Psoas muscle (tissue), 8 donors: ENCODE measurements at regions of chr12 and their contacts with region 1.

Region 1: DNA sequence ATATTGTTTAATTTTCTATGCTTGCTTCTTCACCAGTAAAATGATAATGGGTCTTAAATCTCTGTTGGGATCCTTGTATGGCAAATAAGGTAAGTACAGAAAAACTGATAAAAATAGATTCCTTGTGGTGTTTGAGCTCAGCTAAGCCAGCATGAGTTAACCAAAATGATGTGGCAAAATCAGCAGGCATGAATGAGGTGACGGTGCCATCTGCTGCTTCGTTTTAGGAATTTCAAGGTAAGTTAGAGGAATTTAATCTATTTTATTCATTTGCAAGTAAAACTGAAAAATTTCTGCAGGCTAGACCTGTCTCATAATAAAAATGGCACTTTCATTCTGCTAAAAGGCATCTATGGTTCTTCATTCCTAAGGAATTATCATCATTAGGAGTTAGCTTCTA is 10.0 kb upstream of the CLEC7A start:
- DNase-seq: no peak
- ATAC-seq: no peak
- H3K4me3 ChIP-seq: no peak overlapping the region
- H3K27ac ChIP-seq: no peak overlapping the region
- H3K4me1 ChIP-seq: no peaks in the 10 kb centered on the region
- H3K27me3 ChIP-seq: peaks cover 0 to 2% (median 0%) of the 10 kb centered on the region in 3 donors
- CTCF ChIP-seq: peak; percentile 45

Region 2: GRCh38 chr12:9721394-9722092 is 418.5 kb before region 1 on chr12:
- intact Hi-C with region 1: no loop called
- DNase-seq: no peak
- ATAC-seq: no peak
- H3K4me3 ChIP-seq: no peak overlapping the region
- H3K27ac ChIP-seq: no peak overlapping the region
- H3K4me1 ChIP-seq: no peaks in the 10 kb centered on the region
- H3K27me3 ChIP-seq: no peaks in the 10 kb centered on the region
- CTCF ChIP-seq: no peak

Region 3: DNA sequence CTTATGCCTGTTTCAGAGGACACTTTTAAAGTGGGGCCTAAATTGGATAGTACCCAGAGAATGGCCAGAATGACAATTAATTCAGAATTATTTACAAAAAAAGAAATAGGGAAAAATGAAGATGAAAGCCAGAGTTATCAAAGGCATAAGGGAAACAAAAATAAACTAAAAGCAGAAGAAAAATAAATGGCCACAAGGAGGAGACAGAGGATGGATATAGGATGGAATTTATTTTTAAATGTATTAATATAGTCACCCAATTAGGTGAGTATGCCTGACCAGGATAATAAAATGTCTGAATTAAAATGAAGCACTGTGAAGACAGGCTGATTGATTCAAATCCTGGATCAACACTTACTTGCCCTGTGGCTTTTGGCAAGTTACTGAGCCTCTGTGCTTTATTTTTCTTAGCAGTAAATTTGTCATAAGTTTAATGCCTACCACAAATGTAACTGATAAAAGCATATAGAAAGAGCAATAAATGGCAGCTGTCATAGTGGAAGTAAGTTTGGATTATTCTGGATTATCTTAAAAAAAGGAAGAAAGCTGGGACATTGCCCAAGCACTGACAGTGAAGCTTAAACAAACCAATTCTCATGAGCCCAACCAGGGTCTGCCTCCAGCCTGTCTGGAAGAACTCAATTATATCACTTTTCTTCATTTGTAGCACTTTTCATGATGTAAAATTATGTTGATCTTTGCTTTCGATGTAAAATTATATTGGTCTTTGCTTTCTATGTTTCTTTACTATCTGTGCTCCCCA is 106.0 kb before region 1 on chr12:
- intact Hi-C with region 1: loop called in 1 of 2 experiments (anchors 5 kb)
- DNase-seq: no peak
- ATAC-seq: no peak
- H3K4me3 ChIP-seq: no peak overlapping the region
- H3K27ac ChIP-seq: no peak overlapping the region
- H3K4me1 ChIP-seq: no peaks in the 10 kb centered on the region
- H3K27me3 ChIP-seq: no peaks in the 10 kb centered on the region
- CTCF ChIP-seq: peak; percentile 49